ENCODE measurements at regions of chr1 and their contacts with region 1.

Region 1: DNA sequence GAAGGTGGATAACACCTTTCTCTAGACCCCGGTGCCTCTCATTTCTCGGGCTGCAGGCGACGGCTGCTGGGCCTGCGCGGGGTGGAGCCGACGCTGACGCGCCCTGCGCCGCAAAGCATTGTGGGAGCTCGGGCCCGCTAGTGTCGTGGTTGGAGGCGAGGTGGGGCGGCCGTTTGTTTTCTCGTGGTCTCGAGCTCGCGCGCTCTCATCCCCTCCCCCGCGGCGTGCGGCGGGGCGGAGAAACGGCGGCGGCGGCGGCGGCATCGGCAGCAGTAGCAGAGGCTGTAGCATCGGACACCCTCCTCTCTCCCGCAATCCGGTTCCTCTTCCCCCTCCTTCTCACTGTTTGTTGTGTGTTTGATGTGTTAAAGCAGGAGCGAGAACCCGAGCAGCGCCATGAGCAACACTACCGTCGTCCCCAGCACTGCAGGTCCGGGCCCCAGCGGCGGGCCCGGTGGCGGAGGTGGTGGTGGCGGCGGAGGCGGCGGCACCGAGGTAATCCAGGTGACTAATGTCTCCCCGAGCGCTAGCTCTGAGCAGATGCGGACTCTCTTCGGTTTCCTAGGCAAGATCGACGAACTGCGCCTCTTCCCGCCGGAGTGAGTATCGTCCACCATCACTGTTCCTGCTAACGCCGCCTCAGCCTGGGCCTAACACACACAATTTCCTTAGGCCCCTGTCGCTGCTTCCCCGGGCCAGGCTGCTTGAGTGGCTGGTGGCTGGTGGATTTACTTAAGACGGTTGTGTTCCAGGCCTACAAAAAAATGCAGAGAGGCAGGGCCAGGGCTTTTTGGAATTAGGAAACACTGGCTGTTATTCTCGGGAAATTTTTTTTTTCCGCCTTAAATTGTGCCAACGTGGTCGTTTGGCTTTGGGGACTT is at the start of gene SRSF11:
- DNase-seq: peak; percentile 97
- ATAC-seq: peak; percentile 96
- H3K4me3 ChIP-seq: peak within 1 kb of the TSS; percentile 69 to 81 (median 79)
- H3K4me3 Mint-ChIP-seq: peak within 1 kb of the TSS; percentile 93
- H3K27ac ChIP-seq: peak within 1 kb of the TSS; percentile 94
- H3K27ac Mint-ChIP-seq: peak within 1 kb of the TSS; percentile 97
- H3K4me1 ChIP-seq: peaks cover 11 to 25% of the 10 kb centered on the region in 2 donors
- H3K4me1 Mint-ChIP-seq: peaks cover 47% of the 10 kb centered on the region
- H3K27me3 ChIP-seq: no peaks in the 10 kb centered on the region
- H3K27me3 Mint-ChIP-seq: no peaks in the 10 kb centered on the region
- CTCF ChIP-seq: no peak
- total RNA-seq, gene SRSF11: 322 and 333 TPM in 2 replicates

Region 2: DNA sequence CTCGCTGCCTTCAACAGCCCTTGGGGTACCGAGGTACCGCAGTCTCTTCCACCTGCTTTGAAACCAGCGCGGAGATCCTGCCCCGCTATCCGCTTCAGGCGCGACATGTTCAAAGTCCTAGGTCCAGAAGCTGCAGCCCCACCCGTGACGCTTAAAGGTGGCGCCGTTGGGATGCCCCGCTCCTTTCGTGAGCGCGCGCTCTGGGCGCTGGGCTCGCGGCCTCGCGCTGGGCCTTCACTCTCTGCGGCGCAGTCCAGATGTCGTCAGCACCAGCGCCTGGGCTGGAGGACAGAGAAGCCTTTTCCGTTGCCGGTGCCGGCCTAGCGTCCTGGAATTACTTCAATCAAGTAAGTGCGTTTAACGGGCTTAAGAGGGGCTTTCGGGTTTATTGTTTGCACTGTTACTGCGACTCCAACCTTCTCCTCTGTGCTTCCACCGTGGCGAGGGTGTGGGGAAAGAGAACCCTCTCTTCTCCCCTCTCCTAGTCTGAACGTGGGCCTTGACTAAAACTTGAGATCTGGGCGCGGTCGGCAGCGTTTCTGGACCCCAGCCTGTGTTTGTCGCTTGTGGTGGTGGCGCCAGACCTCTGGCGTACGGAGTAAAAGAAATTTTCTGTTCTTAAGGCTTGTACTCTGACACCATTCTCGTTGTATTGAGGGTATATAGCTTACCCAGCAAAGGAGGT is 15.9 kb before region 1 on chr1 and contains the start of gene LRRC40:
- CTCF ChIA-PET with region 1: interaction called, 12 read pairs
- POLR2A ChIA-PET with region 1: interaction called, 14 read pairs
- intact Hi-C with region 1: loop called (anchors 1 kb)
- DNase-seq: peak; percentile 96
- ATAC-seq: peak; percentile 96
- H3K4me3 ChIP-seq: peak within 1 kb of the TSS; percentile 63 to 93 (median 91)
- H3K4me3 Mint-ChIP-seq: peak within 1 kb of the TSS; percentile 98
- H3K27ac ChIP-seq: peak within 1 kb of the TSS; percentile 86 to 92
- H3K27ac Mint-ChIP-seq: peak within 1 kb of the TSS; percentile 98
- H3K4me1 ChIP-seq: peaks cover 18 to 30% of the 10 kb centered on the region in 2 donors
- H3K4me1 Mint-ChIP-seq: peaks cover 66% of the 10 kb centered on the region
- H3K27me3 ChIP-seq: no peaks in the 10 kb centered on the region
- H3K27me3 Mint-ChIP-seq: no peaks in the 10 kb centered on the region
- CTCF ChIP-seq: no peak
- total RNA-seq, gene LRRC40: 14.5 and 14.6 TPM in 2 replicates

Region 3: DNA sequence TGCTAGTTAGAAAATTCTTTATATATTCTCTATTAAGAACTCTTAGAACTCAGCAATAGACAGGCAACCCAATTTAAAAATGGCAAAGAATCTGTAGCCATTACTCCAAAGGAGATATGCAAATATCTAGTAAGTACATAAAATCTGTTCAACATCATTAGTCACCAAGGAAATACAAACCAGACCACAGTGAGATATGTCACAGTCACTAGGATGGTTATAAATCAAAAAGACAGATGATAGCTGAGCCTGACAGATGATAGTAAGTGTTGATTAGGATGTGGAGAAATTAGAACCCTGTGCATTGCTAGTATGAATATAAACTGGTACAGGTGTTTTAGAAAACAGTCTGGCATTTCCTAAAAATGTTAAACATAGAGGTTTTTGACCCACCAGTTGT is 26.3 kb after region 1 on chr1:
- CTCF ChIA-PET with region 1: no interaction called
- POLR2A ChIA-PET with region 1: no interaction called
- intact Hi-C with region 1: no loop called
- DNase-seq: no peak
- ATAC-seq: no peak
- H3K4me3 ChIP-seq: no peak overlapping the region
- H3K4me3 Mint-ChIP-seq: no peak overlapping the region
- H3K27ac ChIP-seq: no peak overlapping the region
- H3K27ac Mint-ChIP-seq: no peak overlapping the region
- H3K4me1 ChIP-seq: no peaks in the 10 kb centered on the region
- H3K4me1 Mint-ChIP-seq: no peaks in the 10 kb centered on the region
- H3K27me3 ChIP-seq: no peaks in the 10 kb centered on the region
- H3K27me3 Mint-ChIP-seq: no peaks in the 10 kb centered on the region
- CTCF ChIP-seq: no peak

Measured in B cell (primary cell).